ACHN (cell line): ENCODE measurements at regions of chr3 and their contacts with region 1.

Region 1: DNA sequence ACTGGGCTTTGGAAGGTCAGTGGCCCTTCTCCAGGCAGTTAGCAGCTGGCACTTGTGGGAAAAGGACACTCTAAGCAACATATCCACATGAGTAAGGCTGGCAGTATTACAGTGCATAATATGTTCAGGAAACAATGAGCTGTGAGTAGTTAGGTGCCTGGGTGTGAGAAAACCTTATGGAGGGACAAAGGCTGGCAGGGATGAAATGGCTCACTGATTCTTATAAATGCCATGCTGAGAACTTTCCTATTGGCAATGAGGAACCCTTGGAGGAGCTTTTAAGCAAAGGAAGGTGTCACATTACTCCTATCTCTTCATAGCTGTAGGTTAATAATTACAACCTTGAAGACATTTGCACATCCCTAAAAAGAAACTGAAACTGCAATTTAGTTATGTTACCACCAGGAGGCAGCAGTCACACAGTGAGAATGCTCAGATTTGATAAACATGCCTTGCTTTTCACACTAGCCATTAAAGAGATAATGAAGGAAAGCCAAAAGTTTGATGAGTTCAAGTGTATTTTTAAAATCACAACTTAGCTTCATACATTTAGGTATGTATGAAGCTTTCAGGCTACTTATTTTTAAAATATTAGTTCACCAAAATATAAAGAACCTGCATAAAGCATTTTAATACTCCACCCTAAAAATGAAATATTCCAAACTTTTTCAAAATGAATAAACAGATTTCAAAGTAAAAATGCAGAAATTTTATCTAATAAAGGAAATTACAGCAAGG is 136.6 kb upstream of the SLC2A2 start:
- DNase-seq: no peak

Region 2: GRCh38 chr3:169998568-169999131 is 1164.5 kb before region 1 on chr3:
- in situ Hi-C with region 1: no loop called
- DNase-seq: no peak

Region 3: DNA sequence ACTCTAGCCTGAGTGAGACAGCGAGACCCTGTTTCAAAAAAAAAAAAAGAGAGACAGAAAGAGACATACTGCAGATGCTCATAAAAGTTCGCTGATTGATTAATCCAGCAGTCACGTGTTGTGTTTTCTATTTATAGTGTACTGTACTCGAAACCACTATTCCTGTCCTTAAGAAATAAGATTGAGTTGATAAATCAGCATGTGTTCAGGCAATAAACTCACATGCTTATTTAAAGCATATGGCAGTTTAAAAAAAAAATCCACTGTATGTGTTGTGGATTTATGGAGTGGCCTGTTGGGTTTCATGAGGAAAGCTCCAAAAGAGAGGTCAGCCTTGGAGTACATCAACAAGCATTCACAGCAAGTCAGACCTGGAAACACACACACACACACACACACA is 310.8 kb before region 1 on chr3:
- in situ Hi-C with region 1: no loop called
- DNase-seq: no peak

Region 4: DNA sequence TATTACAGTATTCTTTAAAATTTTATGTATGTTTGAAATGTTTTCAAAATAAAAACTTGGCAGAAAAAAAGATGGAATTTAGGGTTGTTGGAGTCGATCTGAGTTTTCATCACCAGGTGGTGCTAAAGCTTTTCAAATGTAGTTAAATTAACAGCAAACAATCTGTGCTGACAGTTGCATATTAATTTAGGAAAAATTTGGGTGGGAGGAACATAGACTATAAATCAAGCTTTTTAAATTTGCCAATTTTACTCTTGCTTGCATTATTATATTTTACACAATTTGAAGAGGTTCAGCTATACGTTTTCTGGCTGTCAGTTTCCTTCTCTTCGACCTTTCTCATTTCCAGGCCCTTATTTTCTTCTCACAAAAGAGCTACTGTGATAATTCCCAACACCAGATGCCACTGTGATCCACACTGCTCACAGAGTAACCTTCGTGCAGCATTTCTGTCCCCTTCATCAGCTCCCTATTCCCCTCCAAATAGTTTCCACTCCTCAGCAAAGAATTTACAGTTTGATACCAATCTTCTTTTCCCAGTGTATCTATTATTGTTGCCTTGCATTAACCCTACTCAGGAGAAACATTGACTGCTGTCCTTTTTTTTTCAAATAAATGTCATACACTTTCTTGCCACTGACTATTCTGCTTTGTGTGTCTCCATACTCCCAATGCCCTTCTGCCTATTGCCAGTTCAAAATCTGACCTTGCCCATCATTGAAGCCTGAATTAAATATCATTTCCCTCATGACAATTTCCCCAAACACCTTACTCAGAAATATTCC is 201.3 kb before region 1 on chr3:
- in situ Hi-C with region 1: loop called (anchors 25 kb)
- DNase-seq: peak; percentile 59